ENCODE measurements at regions of chr19 and their contacts with region 1.

Region 1: GRCh38 chr19:55116232-55116858 is 1.1 kb downstream of the PPP1R12C start:
- DNase-seq: peak; percentile 69 to 97 (median 80)

Region 2: GRCh38 chr19:55053735-55054134 is 62.6 kb before region 1 on chr19:
- intact Hi-C with region 1: no loop called
- DNase-seq: peak in 1 of 10 donors; percentile 24

Region 3: DNA sequence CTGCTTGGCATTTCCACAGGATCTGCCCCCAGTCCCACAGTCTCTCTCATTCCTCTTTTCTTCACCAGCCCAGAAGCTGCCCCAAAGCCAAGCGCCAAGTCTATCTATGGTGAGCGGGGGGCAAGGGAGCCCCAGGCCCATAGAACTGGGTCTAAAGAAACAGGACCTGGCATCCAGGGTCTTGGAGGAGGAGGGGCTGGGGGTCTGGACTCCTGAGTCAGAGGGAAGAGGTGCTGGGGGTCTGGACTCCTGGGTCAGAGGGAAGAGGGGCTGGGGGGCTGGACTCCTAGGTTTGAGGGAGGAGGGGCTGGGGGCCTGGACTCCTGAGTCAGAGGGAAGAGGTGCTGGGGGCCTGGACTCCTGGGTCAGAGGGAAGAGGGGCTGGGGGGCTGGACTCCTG is 38.3 kb before region 1 on chr19:
- intact Hi-C with region 1: no loop called
- DNase-seq: peak in 2 of 10 donors; percentile 41 to 46

Region 4: GRCh38 chr19:55088543-55089341 is 27.6 kb before region 1 on chr19:
- intact Hi-C with region 1: loop called (anchors 1 kb)
- DNase-seq: peak in 9 of 10 donors; percentile 56 to 94 (median 82)

Region 5: GRCh38 chr19:55160128-55160985 is 44.0 kb after region 1 on chr19:
- intact Hi-C with region 1: no loop called
- DNase-seq: peak; percentile 33 to 93 (median 62)

Measured in posterior cingulate gyrus (tissue), 11 donors.